ENCODE measurements at regions of chr10 and their contacts with region 1.

Region 1: DNA sequence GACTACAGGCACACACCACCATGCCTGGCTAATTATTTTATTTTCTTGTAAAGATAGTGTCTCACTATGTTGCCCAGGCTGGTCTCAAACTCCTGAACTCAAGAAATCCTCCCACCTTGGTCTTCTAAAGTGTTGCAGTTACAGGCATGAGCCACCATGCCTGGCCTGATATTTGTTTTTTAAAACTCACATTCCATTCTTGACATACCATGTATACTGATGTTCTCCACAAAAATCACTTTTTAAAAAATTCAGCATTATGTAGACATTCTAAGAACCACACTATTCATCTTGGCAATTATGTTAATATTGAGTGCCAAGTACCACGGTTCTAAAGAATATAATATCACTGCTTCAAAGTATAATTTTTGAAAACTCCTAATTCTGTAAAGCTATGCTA is 43.5 kb downstream of the IDE start:
- DNase-seq: peak; percentile 31
- ATAC-seq: peak; percentile 92
- H3K4me3 ChIP-seq: no peak overlapping the region
- H3K27ac ChIP-seq: peak overlapping the region; percentile 2; the same call in 1 of the 2 replicates
- H3K4me1 ChIP-seq: peaks cover 1% of the 10 kb centered on the region; the same call in 1 of the 2 replicates
- H3K27me3 ChIP-seq: no peaks in the 10 kb centered on the region
- CTCF ChIP-seq: no peak
- POLR2A ChIP-seq: no peak
- RAD21 ChIP-seq: no peak

Region 2: GRCh38 chr10:92873029-92873428 is 342.6 kb after region 1 on chr10:
- CTCF ChIA-PET with region 1: no interaction called
- POLR2A ChIA-PET with region 1: no interaction called
- dilution Hi-C with region 1: no loop called
- in situ Hi-C with region 1: loop called (anchors 10 kb)
- intact Hi-C with region 1: no loop called
- DNase-seq: no peak
- ATAC-seq: 0 out of 2 replicates have a peak, but pooled peaks have one; percentile 11
- H3K4me3 ChIP-seq: no peak overlapping the region
- H3K27ac ChIP-seq: no peak overlapping the region
- H3K4me1 ChIP-seq: no peaks in the 10 kb centered on the region
- H3K27me3 ChIP-seq: no peaks in the 10 kb centered on the region
- CTCF ChIP-seq: no peak
- POLR2A ChIP-seq: no peak
- RAD21 ChIP-seq: no peak